A673 (cell line): ENCODE measurements at regions of chr1 and their contacts with region 1.

Region 1: GRCh38 chr1:24329797-24330543 is 10.8 kb downstream of the GRHL3 start:
- DNase-seq: peak; percentile 59
- H3K4me3 ChIP-seq: no peak overlapping the region
- H3K27ac ChIP-seq: peak overlapping the region; percentile 24
- H3K4me1 ChIP-seq: peaks cover 13% of the 10 kb centered on the region
- H3K27me3 ChIP-seq: no peaks in the 10 kb centered on the region
- CTCF ChIP-seq: no peak

Region 2: DNA sequence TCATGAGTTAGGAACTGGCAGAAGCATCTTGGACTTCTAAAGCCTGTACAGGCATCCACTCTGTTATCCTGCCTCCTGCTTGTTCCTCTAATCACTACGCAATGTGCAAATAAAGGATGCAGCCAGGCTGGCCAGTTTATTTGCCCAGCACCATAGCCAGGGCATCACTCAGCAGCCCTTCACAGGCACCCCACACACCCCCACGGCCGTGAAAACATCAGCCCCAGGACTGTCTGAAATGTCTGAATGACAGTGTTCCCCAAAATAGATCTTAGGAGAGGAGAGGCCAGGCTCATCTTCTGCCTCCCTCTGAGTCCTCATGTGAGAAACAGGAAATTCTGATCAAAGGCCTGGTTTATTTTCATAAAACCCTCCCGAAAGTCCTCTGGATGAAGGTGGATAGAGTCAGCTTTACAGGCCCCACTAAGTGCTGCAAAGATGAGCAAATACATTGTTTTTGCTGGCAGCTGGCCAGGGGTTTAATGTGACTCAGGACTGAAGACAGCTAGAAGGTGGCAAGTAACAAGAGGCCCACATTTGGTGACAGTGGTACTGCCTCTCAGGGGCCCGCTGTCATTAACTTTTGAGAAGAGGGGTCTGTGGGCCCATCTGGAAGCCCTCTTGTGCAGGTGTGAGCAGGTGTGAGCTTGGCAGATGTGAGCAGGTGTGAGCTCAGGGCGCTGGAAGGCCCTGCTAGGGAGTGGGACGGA is 22.1 kb after region 1 on chr1:
- CTCF ChIA-PET with region 1: no interaction called
- POLR2A ChIA-PET with region 1: interaction called, 16 read pairs
- intact Hi-C with region 1: no loop called
- DNase-seq: peak; percentile 47
- H3K4me3 ChIP-seq: no peak overlapping the region
- H3K27ac ChIP-seq: no peak overlapping the region
- H3K4me1 ChIP-seq: no peaks in the 10 kb centered on the region
- H3K27me3 ChIP-seq: no peaks in the 10 kb centered on the region
- CTCF ChIP-seq: no peak